Mucosa of descending colon (tissue), 3 donors: ENCODE measurements at regions of chr2 and their contacts with region 1.

Region 1: GRCh38 chr2:200471324-200471848 is 38.5 kb downstream of the KCTD18 start:
- DNase-seq: peak in 1 of 3 donors; percentile 40
- ATAC-seq: peak; percentile 43
- H3K4me3 ChIP-seq: no peak overlapping the region
- H3K4me1 ChIP-seq: no peaks in the 10 kb centered on the region
- CTCF ChIP-seq: no peak

Region 2: GRCh38 chr2:199979832-199980628 is 491.4 kb before region 1 on chr2:
- intact Hi-C with region 1: loop called in 1 of 2 experiments (anchors 5 kb)
- DNase-seq: peak; percentile 68 to 98 (median 87)
- ATAC-seq: peak; percentile 71
- H3K4me3 ChIP-seq: no peak overlapping the region
- H3K4me1 ChIP-seq: peaks cover 15% of the 10 kb centered on the region
- CTCF ChIP-seq: peak; percentile 75

Region 3: DNA sequence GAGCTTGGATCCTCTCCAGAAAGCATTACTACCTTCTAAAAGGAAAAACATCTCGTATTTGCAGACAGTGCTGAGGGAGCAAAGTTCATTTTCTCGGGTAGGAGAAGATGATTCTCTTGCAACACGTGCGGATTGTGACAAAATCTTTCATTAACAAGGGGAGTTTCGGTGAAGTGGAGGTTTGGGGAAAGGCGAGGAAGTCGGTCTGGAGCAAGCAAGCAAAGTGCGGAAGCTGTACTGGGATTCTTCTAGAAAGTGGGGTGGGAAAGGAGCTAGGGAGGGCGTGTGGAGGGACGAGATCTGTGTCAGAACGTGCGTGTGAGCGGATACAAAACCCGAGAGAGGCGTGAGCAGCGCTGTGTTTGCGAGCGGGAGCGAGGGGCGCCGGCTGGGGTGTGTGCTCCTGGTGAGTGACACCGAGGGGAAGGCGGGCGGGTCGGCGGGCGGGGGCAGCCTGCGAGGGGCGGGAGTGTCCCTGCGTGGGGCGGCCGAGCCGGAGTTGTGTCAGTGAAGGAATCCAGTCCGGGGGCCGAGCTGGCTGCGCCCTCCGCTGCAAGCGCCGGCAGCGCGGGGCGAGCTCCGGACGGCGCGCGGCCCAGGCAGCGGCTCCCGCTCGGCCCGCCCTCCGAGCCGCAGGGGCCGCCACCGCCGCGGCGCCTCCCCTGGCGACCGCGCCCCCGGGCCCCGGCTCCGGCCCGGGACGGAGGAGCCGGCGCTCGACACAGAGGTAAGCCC is 165.0 kb before region 1 on chr2 and contains the start of gene SPATS2L:
- intact Hi-C with region 1: loop called in 1 of 2 experiments (anchors 10 kb)
- DNase-seq: peak; percentile 79 to 87 (median 84)
- ATAC-seq: peak; percentile 76
- H3K4me3 ChIP-seq: peak within 1 kb of the TSS; percentile 77
- H3K4me1 ChIP-seq: peaks cover 8% of the 10 kb centered on the region
- CTCF ChIP-seq: no peak
- total RNA-seq, gene SPATS2L: 160 to 238 (median 232) TPM

Region 4: DNA sequence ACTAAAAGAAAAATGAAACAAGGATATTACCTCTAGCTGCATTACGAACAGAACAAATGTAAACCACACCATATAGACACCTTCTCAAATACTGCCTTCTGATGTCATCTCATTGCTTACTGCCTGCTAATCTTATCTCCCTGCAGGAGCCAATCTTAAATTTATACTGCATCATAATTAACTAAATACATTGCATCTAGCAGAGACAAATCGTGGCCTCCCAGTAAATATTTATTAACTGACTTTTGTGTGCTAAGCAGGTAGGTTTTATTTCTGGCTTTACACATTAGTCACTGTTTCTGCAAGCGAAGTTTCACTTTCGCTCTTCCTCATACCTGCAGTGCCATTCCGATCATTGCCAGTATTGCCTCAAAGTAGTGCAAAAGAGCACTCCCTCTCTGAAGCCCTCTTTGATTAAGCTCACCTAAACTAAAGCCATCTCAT is 97.4 kb before region 1 on chr2:
- intact Hi-C with region 1: no loop called
- DNase-seq: peak in 1 of 3 donors; percentile 55
- ATAC-seq: peak; percentile 48
- H3K4me3 ChIP-seq: no peak overlapping the region
- H3K4me1 ChIP-seq: peaks cover 44% of the 10 kb centered on the region
- CTCF ChIP-seq: no peak

Region 5: DNA sequence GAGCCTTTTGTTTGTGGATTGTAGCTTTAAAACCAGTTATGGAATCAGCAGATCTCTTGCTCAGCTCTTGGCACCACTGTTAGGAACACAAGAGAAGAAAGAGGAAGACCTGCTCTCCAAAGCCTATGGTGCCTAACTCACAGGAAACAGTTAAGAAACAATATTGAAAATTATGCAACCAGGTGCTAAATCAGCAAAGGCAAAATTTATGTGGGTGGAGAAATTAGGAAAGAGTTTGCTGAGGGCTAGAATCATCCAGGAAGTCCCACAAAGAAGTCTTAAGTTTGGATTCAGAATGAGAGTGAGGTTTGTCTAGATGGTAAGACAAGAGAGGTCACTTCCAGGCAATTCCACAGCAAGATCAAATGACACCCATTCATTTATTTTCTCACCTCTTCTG is 163.9 kb after region 1 on chr2:
- intact Hi-C with region 1: no loop called
- DNase-seq: no peak
- ATAC-seq: no peak
- H3K4me3 ChIP-seq: no peak overlapping the region
- H3K4me1 ChIP-seq: no peaks in the 10 kb centered on the region
- CTCF ChIP-seq: no peak